ENCODE measurements at regions of chr2 and their contacts with region 1.

Region 1: GRCh38 chr2:200274116-200275075 is 32.1 kb upstream of the SPATS2L start:
- DNase-seq: no peak
- ATAC-seq: no peak
- H3K4me3 Mint-ChIP-seq: no peak overlapping the region
- H3K27ac Mint-ChIP-seq: no peak overlapping the region
- H3K4me1 Mint-ChIP-seq: peaks cover 3% of the 10 kb centered on the region
- H3K27me3 Mint-ChIP-seq: no peaks in the 10 kb centered on the region
- CTCF ChIP-seq: no peak

Region 2: GRCh38 chr2:200288658-200289427 is 14.4 kb after region 1 on chr2:
- CTCF ChIA-PET with region 1: no interaction called
- POLR2A ChIA-PET with region 1: no interaction called
- intact Hi-C with region 1: loop called (anchors 2 kb)
- DNase-seq: no peak
- ATAC-seq: no peak
- H3K4me3 Mint-ChIP-seq: no peak overlapping the region
- H3K27ac Mint-ChIP-seq: no peak overlapping the region
- H3K4me1 Mint-ChIP-seq: no peaks in the 10 kb centered on the region
- H3K27me3 Mint-ChIP-seq: peaks cover 18% of the 10 kb centered on the region
- CTCF ChIP-seq: no peak

Measured in activated B cell treated with CpG ODN at 0.5 μM for 24 hours (primary cell).